ENCODE measurements at regions of chr13 and their contacts with region 1.

Region 1: DNA sequence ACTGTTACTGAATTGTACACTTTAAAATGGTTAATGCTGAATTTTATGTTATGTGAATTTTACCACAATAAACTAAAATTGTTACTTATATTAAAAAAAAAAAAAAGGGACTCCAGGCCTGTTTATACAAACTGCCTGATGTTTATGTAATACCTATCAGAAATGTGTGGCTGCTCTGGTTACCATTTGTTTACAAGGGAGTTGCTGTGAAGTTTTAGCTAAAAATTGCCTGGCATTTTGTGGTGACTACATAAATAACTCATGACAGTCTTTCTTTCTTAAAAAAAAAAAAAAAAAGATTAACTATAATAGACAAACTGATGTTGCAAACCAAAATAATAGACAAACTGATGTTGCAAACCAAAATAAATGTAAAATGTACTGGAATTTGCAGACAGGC is 71.8 kb downstream of the CDADC1 start:
- DNase-seq: no peak
- H3K4me3 ChIP-seq: no peak overlapping the region
- H3K27ac ChIP-seq: peak overlapping the region in 2 of 4 donors; percentile 5 to 15
- H3K4me1 ChIP-seq: peaks cover 7 to 26% (median 23%) of the 10 kb centered on the region in 4 donors
- H3K27me3 ChIP-seq: no peaks in the 10 kb centered on the region
- CTCF ChIP-seq: no peak
- EP300 ChIP-seq: no peak
- POLR2A ChIP-seq: no peak

Region 2: GRCh38 chr13:48962281-48962680 is 357.3 kb before region 1 on chr13:
- intact Hi-C with region 1: no loop called
- DNase-seq: no peak
- H3K4me3 ChIP-seq: no peak overlapping the region
- H3K27ac ChIP-seq: no peak overlapping the region
- H3K4me1 ChIP-seq: no peaks in the 10 kb centered on the region
- H3K27me3 ChIP-seq: no peaks in the 10 kb centered on the region
- CTCF ChIP-seq: no peak
- EP300 ChIP-seq: no peak
- POLR2A ChIP-seq: no peak

Region 3: DNA sequence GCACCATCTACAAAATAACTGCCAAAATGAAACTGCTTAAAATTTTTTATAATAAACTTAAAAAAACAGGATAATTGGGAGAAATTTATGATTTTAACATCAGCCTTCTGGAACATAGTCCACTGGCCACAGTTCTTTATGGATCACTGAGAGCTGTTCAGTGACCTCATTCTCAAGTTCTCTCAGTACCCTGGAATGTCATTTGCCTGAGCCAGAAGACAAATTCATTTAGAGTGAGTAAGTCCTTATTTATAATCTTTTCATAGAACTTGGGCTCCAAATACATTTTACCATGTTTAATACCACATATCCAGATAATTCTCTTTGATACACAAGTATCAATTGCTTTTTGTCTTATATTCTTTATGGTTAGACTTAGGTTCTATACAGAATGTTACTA is 36.7 kb after region 1 on chr13:
- intact Hi-C with region 1: loop called (anchors 5 kb)
- DNase-seq: no peak
- H3K4me3 ChIP-seq: no peak overlapping the region
- H3K27ac ChIP-seq: peak overlapping the region; percentile 56 to 76 (median 62)
- H3K4me1 ChIP-seq: peaks cover 3 to 32% (median 21%) of the 10 kb centered on the region in 4 donors
- H3K27me3 ChIP-seq: no peaks in the 10 kb centered on the region
- CTCF ChIP-seq: no peak
- EP300 ChIP-seq: no peak
- POLR2A ChIP-seq: no peak

Measured in esophagus muscularis mucosa (tissue), 4 donors.